Colonic mucosa (tissue), 4 donors: ENCODE measurements at regions of chr6 and their contacts with region 1.

Region 1: GRCh38 chr6:49531774-49532569 is 18.5 kb upstream of the C6orf141 start:
- DNase-seq: no peak
- H3K4me3 ChIP-seq: no peak overlapping the region
- H3K27ac ChIP-seq: no peak overlapping the region
- H3K4me1 ChIP-seq: peaks cover 3% of the 10 kb centered on the region
- H3K27me3 ChIP-seq: no peaks in the 10 kb centered on the region
- CTCF ChIP-seq: peak; percentile 72

Region 2: DNA sequence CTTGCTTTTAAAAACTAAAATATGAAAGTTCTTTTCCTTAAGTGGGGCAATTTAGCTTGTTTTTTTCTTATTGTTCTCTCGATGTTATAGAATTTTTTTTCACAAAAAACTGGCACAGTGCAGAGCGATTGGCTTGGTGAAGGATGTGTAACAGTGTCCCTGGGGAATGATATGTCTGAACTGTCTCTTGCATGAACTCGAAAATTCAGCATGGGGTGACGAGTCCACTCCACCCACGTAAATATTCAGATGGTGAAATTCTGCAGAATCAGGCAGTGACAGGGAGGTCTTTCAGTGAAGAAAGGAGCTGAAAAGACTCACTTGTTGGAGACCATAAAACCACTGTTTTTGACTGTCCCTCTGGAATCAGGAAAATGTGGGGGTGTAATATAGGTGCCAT is 574.2 kb before region 1 on chr6:
- intact Hi-C with region 1: no loop called
- DNase-seq: no peak
- H3K4me3 ChIP-seq: no peak overlapping the region
- H3K27ac ChIP-seq: no peak overlapping the region
- H3K4me1 ChIP-seq: no peaks in the 10 kb centered on the region
- H3K27me3 ChIP-seq: no peaks in the 10 kb centered on the region
- CTCF ChIP-seq: no peak

Region 3: GRCh38 chr6:49609285-49609684 is 77.3 kb after region 1 on chr6:
- intact Hi-C with region 1: loop called (anchors 2 kb)
- DNase-seq: no peak
- H3K4me3 ChIP-seq: no peak overlapping the region
- H3K27ac ChIP-seq: no peak overlapping the region
- H3K4me1 ChIP-seq: no peaks in the 10 kb centered on the region
- H3K27me3 ChIP-seq: no peaks in the 10 kb centered on the region
- CTCF ChIP-seq: no peak